Activated T-helper 2 cell treated with anti-CD3 and anti-CD28 coated beads, Interferon-gamma antibody, Interleukin-2, Interleukin-4, amounts not matched to agents 10 μg/mL and 5 μg/mL and 100 μg/mL, durations not matched to agents 14 hours and 24 hours and 36 hours (primary cell): ENCODE measurements at regions of chr6 and their contacts with region 1.

Region 1: GRCh38 chr6:155188707-155189496 is 74.9 kb upstream of the CLDN20 start:
- DNase-seq: no peak
- H3K4me3 Mint-ChIP-seq: peak overlapping the region; percentile 26
- H3K27ac Mint-ChIP-seq: peak overlapping the region; percentile 89
- H3K4me1 Mint-ChIP-seq: peaks cover 46% of the 10 kb centered on the region
- H3K27me3 Mint-ChIP-seq: no peaks in the 10 kb centered on the region

Region 2: GRCh38 chr6:154606457-154606856 is 582.4 kb before region 1 on chr6:
- intact Hi-C with region 1: loop called (anchors 5 kb)
- DNase-seq: peak; percentile 26
- H3K4me3 Mint-ChIP-seq: peak overlapping the region; percentile 5
- H3K27ac Mint-ChIP-seq: peak overlapping the region; percentile 71
- H3K4me1 Mint-ChIP-seq: peaks cover 38% of the 10 kb centered on the region
- H3K27me3 Mint-ChIP-seq: peaks cover 10% of the 10 kb centered on the region

Region 3: GRCh38 chr6:155223646-155224451 is 34.9 kb after region 1 on chr6:
- intact Hi-C with region 1: loop called (anchors 1 kb)
- DNase-seq: peak; percentile 56
- H3K4me3 Mint-ChIP-seq: peak overlapping the region; percentile 19
- H3K27ac Mint-ChIP-seq: peak overlapping the region; percentile 77
- H3K4me1 Mint-ChIP-seq: peaks cover 27% of the 10 kb centered on the region
- H3K27me3 Mint-ChIP-seq: no peaks in the 10 kb centered on the region

Region 4: GRCh38 chr6:155264693-155265320 is 75.9 kb after region 1 on chr6:
- intact Hi-C with region 1: no loop called
- DNase-seq: no peak
- H3K4me3 Mint-ChIP-seq: no peak overlapping the region
- H3K27ac Mint-ChIP-seq: no peak overlapping the region
- H3K4me1 Mint-ChIP-seq: peaks cover 28% of the 10 kb centered on the region
- H3K27me3 Mint-ChIP-seq: no peaks in the 10 kb centered on the region